Caco-2 (cell line): ENCODE measurements at regions of chr5 and their contacts with region 1.

Region 1: DNA sequence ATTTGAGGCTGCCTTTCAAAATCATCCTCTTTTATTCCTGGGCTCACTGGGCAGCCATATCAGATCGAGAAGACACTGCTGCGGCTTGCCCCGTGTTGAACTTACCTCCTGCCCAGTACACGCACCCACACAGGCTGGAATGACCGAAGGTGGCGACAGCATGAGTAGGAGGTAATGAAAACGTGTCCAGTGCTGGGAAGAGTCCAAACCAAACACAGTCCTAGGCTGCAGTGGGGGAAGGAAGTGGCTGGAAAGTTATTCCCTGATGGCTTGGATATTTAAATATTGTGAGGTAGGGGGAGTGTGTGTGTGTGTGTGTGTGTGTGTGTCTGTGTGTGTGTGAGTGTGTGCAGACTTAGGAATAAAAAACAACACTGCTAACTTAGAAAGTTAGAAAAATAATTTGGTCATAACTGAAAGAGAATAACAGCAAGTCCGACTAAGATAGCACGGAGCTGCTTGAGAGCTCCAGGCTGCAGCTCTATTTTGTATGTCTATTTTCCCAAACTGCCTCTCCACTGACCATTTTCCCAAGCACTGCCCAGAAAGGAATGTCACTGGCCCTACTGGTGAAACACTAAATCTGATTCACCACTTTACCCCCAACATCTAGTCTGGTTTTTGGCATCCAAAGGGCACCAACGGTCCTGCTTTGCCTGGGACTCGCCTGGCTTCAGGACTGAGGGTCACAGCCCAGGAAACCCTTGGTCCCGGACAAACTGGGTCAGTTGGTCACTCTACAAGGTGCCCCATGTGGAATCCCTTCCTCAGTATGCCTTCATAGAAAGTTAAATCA is 41.2 kb downstream of the ANKH start:
- DNase-seq: no peak
- H3K4me3 ChIP-seq: no peak overlapping the region
- H3K4me3 Mint-ChIP-seq: no peak overlapping the region
- H3K27ac Mint-ChIP-seq: no peak overlapping the region
- H3K4me1 ChIP-seq: no peaks in the 10 kb centered on the region
- H3K4me1 Mint-ChIP-seq: no peaks in the 10 kb centered on the region
- H3K27me3 ChIP-seq: no peaks in the 10 kb centered on the region
- H3K27me3 Mint-ChIP-seq: no peaks in the 10 kb centered on the region
- CTCF ChIP-seq: no peak

Region 2: DNA sequence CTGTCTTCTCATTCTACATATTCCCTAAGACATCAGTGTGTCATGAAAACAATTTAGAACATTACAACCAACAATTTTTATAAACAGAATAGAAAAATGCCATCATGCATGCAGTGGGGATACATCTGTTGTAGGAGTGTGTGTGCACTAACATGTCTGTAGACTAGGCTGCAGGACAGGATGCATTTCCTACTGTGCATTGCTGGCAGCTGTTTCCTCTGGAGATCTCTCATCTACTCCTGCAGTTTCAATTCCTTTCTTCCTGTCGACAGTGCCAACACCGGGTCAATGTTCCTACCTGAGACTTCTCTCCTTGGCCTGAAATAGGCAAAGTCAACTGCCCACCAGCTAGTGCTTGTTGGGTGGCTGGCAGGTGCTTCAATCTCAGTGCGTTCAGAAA is 28.6 kb before region 1 on chr5:
- CTCF ChIA-PET with region 1: no interaction called
- POLR2A ChIA-PET with region 1: no interaction called
- intact Hi-C with region 1: loop called (anchors 1 kb)
- DNase-seq: no peak
- H3K4me3 ChIP-seq: no peak overlapping the region
- H3K4me3 Mint-ChIP-seq: no peak overlapping the region
- H3K27ac Mint-ChIP-seq: no peak overlapping the region
- H3K4me1 ChIP-seq: no peaks in the 10 kb centered on the region
- H3K4me1 Mint-ChIP-seq: no peaks in the 10 kb centered on the region
- H3K27me3 ChIP-seq: no peaks in the 10 kb centered on the region
- H3K27me3 Mint-ChIP-seq: peaks cover 7% of the 10 kb centered on the region
- CTCF ChIP-seq: no peak

Region 3: GRCh38 chr5:15124871-15125568 is 294.6 kb after region 1 on chr5:
- CTCF ChIA-PET with region 1: no interaction called
- POLR2A ChIA-PET with region 1: no interaction called
- intact Hi-C with region 1: no loop called
- DNase-seq: no peak
- H3K4me3 ChIP-seq: no peak overlapping the region
- H3K4me3 Mint-ChIP-seq: no peak overlapping the region
- H3K27ac Mint-ChIP-seq: no peak overlapping the region
- H3K4me1 ChIP-seq: no peaks in the 10 kb centered on the region
- H3K4me1 Mint-ChIP-seq: no peaks in the 10 kb centered on the region
- H3K27me3 ChIP-seq: no peaks in the 10 kb centered on the region
- H3K27me3 Mint-ChIP-seq: peaks cover 4% of the 10 kb centered on the region
- CTCF ChIP-seq: no peak

Region 4: DNA sequence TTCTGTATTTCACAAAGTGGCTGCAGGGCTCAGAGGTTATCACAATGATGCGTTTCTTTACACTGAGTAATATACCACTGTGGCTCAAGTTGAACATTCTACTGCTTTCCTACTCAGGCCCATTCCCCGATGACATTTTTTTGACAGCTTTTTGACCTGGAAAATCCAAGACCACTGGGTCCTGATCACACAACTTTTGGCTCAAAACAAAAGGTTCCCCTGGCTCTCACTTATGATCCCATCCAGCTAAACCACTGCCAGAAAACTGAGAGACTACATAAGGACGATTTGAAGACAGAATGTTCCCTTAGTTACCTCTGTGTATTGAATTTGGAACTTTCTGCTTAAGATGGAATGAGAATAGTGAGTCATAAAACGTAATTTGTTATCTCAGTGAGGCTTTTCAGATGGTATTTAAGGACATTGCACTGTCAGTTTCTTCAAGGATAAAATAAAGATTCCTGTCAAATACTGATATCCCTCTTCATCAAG is 591.6 kb after region 1 on chr5:
- CTCF ChIA-PET with region 1: no interaction called
- POLR2A ChIA-PET with region 1: no interaction called
- intact Hi-C with region 1: no loop called
- DNase-seq: no peak
- H3K4me3 ChIP-seq: no peak overlapping the region
- H3K4me3 Mint-ChIP-seq: no peak overlapping the region
- H3K27ac Mint-ChIP-seq: no peak overlapping the region
- H3K4me1 ChIP-seq: no peaks in the 10 kb centered on the region
- H3K4me1 Mint-ChIP-seq: peaks cover 6% of the 10 kb centered on the region
- H3K27me3 ChIP-seq: no peaks in the 10 kb centered on the region
- H3K27me3 Mint-ChIP-seq: peaks cover 7% of the 10 kb centered on the region
- CTCF ChIP-seq: no peak